ENCODE measurements at regions of chr22 and their contacts with region 1.

Region 1: DNA sequence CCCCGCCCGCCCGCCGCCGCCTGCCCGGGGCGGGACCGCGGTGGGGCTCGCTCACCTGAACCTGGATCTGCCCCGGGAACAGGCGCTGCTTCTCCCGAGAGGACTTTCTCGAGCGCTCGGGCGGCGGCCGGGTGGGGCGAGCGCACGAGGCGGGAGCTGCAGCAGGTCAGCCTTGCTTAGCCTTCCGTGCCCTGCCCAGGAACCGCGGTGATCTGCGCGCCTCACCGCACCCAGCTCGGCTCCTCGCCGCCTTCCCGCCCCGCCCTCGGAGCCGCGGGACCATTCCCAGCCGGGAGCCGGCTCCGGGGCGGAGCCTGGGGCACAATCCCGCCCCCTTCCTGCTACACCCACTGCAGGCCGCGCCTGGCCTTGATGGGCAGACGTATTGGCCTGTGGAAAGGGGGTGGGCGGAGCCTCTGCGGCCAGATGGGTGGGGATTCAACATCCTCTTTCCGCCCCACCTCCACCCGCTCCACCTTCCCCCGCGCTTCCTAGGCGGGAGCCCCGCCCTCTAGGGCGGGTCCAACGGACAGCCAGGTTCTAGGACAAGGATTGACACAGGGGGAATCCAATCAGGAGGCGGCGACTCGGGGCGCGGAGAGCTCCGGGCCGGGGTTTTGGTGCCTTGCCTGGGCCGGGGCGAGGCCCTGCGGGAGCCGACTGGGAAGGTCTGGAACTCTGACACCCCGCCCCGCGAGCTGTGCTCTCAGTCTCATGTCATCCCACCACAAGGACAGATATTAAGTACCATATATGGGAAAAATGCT is at the start of gene MYH9:
- DNase-seq: peak; percentile 97 to 100
- ATAC-seq: peak; percentile 75 to 96 (median 87)
- H3K4me3 ChIP-seq: peak within 1 kb of the TSS; percentile 67
- H3K4me3 Mint-ChIP-seq: peak within 1 kb of the TSS; percentile 96
- H3K27ac ChIP-seq: peak within 1 kb of the TSS; percentile 78
- H3K27ac Mint-ChIP-seq: peak within 1 kb of the TSS; percentile 97
- H3K4me1 ChIP-seq: peaks cover 48% of the 10 kb centered on the region
- H3K4me1 Mint-ChIP-seq: peaks cover 39 to 45% of the 10 kb centered on the region in 2 donors
- H3K27me3 ChIP-seq: no peaks in the 10 kb centered on the region
- H3K27me3 Mint-ChIP-seq: no peaks in the 10 kb centered on the region
- CTCF ChIP-seq: no peak
- total RNA-seq, gene MYH9: 803 to 1,038 (median 808) TPM

Region 2: DNA sequence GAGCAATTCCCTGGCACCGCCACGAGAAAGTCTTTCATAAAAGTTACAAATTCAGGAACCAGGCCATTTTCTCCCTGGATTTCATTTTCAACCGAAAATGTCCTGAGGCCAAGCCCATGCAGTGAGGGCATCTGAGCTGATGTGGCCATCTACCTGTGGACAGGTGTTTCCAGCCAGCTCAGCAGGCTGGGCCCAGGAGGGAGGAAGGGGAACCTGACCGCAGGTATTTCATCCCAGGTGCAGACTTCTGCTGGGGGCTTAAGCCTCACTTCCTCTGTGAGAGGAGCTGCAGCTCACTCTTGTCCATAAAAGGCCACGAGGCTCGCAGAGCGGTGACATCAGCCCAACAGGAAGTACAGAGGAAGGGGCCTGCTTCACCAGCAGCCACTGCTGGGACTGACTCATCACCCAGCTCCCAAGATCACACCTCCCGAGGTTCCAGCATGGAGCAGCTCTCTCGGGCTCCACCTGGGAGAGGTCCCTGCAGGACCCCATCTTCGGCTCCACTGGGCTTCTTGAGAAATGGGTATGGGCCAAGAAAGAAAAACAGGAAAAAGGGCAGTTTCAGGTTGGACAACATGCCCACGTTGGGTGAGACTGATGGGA is 56.5 kb before region 1 on chr22:
- intact Hi-C with region 1: loop called (anchors 1 kb)
- DNase-seq: peak; percentile 74 to 91
- ATAC-seq: peak; percentile 59 to 83 (median 73)
- H3K4me3 ChIP-seq: peak overlapping the region; percentile 2
- H3K4me3 Mint-ChIP-seq: peak overlapping the region; percentile 91
- H3K27ac ChIP-seq: peak overlapping the region; percentile 80
- H3K27ac Mint-ChIP-seq: peak overlapping the region; percentile 98 to 100
- H3K4me1 ChIP-seq: peaks cover 91% of the 10 kb centered on the region
- H3K4me1 Mint-ChIP-seq: peaks cover 94 to 95% of the 10 kb centered on the region in 2 donors
- H3K27me3 ChIP-seq: no peaks in the 10 kb centered on the region
- H3K27me3 Mint-ChIP-seq: no peaks in the 10 kb centered on the region
- CTCF ChIP-seq: no peak

Region 3: DNA sequence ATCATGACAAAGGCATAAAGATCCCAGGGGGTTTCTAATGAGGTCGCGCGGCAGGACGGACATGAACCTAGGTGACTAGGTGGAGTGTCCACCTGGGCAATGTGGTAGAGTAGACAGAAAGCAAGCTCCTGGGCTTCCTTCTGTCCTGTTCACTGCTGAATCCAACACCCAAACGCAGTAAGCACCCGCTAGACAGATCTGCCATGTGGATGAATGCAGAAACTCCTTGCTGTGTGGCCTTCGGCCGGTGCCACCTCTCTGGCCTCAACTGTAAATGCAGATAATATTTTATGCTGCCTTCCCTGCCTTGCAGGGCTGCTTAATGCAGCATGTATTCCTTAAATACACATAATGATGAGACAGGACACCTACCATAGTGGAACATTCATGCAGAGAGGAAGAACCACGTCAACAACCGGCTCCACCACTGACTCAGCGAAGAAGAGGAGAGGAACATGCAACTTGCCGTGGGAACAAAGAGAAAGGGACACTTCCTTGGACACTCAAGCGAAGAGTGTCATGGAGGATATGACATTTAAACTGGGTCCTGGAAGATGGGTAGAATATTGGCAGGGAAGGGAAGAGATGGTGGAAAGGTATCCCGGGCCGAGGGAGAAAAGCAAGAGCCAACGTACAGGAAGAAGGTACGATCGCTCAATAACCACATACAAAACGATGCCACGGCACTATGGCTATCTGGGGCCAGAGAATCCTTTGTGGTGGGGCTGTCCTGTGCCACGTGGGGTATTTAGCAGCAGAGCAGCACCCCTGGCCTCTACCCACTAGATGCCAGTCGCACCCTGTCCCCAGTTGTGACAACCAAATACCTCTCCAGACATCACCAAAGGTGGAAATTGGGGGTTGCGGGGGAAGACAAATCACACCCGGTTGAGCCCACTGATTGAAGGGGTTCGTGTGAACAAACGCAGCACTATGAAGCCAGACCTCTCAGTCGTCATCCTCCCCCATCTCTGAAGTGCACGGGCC is 30.9 kb before region 1 on chr22:
- intact Hi-C with region 1: loop called (anchors 2 kb)
- DNase-seq: peak in 1 of 2 donors; percentile 83
- ATAC-seq: peak; percentile 65 to 75 (median 73)
- H3K4me3 ChIP-seq: no peak overlapping the region
- H3K4me3 Mint-ChIP-seq: peak overlapping the region; percentile 64
- H3K27ac ChIP-seq: peak overlapping the region; percentile 38
- H3K27ac Mint-ChIP-seq: peak overlapping the region; percentile 90 to 96
- H3K4me1 ChIP-seq: peaks cover 99% of the 10 kb centered on the region
- H3K4me1 Mint-ChIP-seq: peaks cover 87 to 93% of the 10 kb centered on the region in 2 donors
- H3K27me3 ChIP-seq: no peaks in the 10 kb centered on the region
- H3K27me3 Mint-ChIP-seq: no peaks in the 10 kb centered on the region
- CTCF ChIP-seq: peak; percentile 42

Region 4: GRCh38 chr22:36365020-36365411 is 22.9 kb before region 1 on chr22:
- intact Hi-C with region 1: loop called (anchors 1 kb)
- DNase-seq: peak; percentile 80 to 97
- ATAC-seq: peak; percentile 90 to 98 (median 94)
- H3K4me3 ChIP-seq: no peak overlapping the region
- H3K4me3 Mint-ChIP-seq: peak overlapping the region; percentile 77
- H3K27ac ChIP-seq: peak overlapping the region; percentile 84
- H3K27ac Mint-ChIP-seq: peak overlapping the region; percentile 90 to 96
- H3K4me1 ChIP-seq: peaks cover 96% of the 10 kb centered on the region
- H3K4me1 Mint-ChIP-seq: peaks cover 89 to 92% of the 10 kb centered on the region in 2 donors
- H3K27me3 ChIP-seq: no peaks in the 10 kb centered on the region
- H3K27me3 Mint-ChIP-seq: no peaks in the 10 kb centered on the region
- CTCF ChIP-seq: no peak

Region 5: GRCh38 chr22:36377022-36377631 is 10.8 kb before region 1 on chr22:
- intact Hi-C with region 1: loop called (anchors 1 kb)
- DNase-seq: peak in 1 of 2 donors; percentile 89
- ATAC-seq: peak; percentile 82 to 94 (median 92)
- H3K4me3 ChIP-seq: peak overlapping the region; percentile 2
- H3K4me3 Mint-ChIP-seq: peak overlapping the region; percentile 91
- H3K27ac ChIP-seq: peak overlapping the region; percentile 87
- H3K27ac Mint-ChIP-seq: peak overlapping the region; percentile 90 to 100
- H3K4me1 ChIP-seq: peaks cover 96% of the 10 kb centered on the region
- H3K4me1 Mint-ChIP-seq: peaks cover 70 to 76% of the 10 kb centered on the region in 2 donors
- H3K27me3 ChIP-seq: no peaks in the 10 kb centered on the region
- H3K27me3 Mint-ChIP-seq: no peaks in the 10 kb centered on the region
- CTCF ChIP-seq: no peak

Region 6: DNA sequence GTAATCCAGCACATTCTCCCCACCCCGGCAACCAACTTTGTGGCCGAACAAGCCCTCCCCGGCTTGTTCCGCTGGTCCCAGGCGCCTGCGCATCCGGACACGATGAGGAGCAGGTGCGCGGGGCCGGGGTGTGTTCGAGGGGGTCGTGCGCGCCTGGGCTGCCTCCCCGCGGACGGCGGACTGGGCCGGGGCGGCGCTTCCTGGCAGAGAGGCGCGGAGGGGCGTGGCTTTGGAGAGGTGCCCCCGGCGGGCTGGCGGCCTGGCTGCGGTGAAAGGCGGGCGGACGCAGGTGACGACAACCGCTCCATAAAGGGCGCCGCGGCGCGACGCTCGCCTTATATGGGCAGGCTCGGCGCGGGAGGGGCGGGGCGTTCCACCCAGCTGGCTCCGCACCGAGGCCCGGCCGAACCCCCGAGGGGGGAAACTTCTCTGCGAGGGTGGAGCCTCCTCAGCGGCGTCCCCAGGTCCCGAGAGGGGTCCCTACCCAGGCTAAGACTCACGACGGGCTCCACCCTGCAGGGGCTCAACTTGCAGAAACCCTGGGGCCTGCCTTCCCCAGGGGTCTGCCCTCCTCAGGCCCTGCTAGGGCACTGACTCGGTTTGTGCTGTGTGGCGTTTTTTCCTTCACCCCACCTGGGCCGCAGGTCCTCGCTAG is 67.1 kb after region 1 on chr22:
- intact Hi-C with region 1: loop called (anchors 5 kb)
- DNase-seq: peak; percentile 93 to 98
- ATAC-seq: peak; percentile 76 to 85 (median 81)
- H3K4me3 ChIP-seq: peak overlapping the region; percentile 68
- H3K4me3 Mint-ChIP-seq: peak overlapping the region; percentile 80
- H3K27ac ChIP-seq: peak overlapping the region; percentile 92
- H3K27ac Mint-ChIP-seq: peak overlapping the region; percentile 97 to 99
- H3K4me1 ChIP-seq: peaks cover 58% of the 10 kb centered on the region
- H3K4me1 Mint-ChIP-seq: peaks cover 37% of the 10 kb centered on the region in 2 donors
- H3K27me3 ChIP-seq: no peaks in the 10 kb centered on the region
- H3K27me3 Mint-ChIP-seq: no peaks in the 10 kb centered on the region
- CTCF ChIP-seq: no peak

Region 7: GRCh38 chr22:36470162-36470993 is 82.4 kb after region 1 on chr22:
- intact Hi-C with region 1: loop called (anchors 5 kb)
- DNase-seq: peak; percentile 69 to 94
- ATAC-seq: peak; percentile 95 to 99 (median 97)
- H3K4me3 ChIP-seq: no peak overlapping the region
- H3K4me3 Mint-ChIP-seq: no peak overlapping the region
- H3K27ac ChIP-seq: no peak overlapping the region
- H3K27ac Mint-ChIP-seq: peak overlapping the region in 1 of 2 donors; percentile 33
- H3K4me1 ChIP-seq: peaks cover 24% of the 10 kb centered on the region
- H3K4me1 Mint-ChIP-seq: peaks cover 17 to 20% of the 10 kb centered on the region in 2 donors
- H3K27me3 ChIP-seq: no peaks in the 10 kb centered on the region
- H3K27me3 Mint-ChIP-seq: no peaks in the 10 kb centered on the region
- CTCF ChIP-seq: peak; percentile 93